ENCODE measurements at regions of chr12 and their contacts with region 1.

Region 1: DNA sequence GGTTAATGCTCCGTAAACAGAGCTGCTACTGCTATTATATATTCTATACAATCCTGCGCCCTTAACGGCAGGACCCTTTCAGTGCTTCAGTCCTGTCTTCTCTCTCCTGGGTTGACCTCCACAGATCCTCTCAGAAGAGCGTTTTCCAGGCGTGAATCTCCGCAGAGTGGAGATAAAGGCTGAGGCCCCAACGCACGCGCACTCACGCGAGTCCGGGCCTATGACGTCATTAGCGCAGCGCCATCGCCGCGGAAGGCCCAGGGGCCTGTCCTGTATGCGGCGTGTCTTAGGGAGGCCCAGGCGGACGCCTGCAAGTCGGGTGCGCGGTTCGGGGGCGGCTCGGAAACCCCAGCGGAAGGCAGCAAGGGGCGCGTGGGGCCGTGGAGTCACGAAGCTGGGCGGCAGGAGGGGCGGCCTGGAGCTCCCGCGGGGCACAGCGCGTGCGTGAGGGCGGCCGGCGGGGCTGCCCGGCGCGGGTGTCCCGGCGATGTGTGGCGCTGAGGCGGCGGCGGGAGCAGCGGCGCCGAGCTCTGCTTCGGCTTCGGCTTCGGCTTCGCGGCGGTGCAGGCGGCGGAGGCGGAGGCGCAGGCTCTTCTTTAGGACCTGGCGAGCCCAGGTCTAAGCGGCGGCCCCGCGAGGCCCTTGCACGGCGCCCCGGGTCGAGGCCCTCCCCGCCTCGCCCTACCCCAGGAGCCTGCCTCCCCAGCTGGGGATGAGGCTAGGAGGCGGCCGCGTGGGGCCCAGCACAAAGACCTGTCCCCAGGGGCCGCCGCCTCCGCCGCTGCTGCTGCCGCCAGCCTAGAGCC is at the start of gene MAPKAPK5:
- DNase-seq: peak; percentile 97
- ATAC-seq: peak; percentile 81
- H3K4me3 Mint-ChIP-seq: peak within 1 kb of the TSS; percentile 87
- H3K27ac Mint-ChIP-seq: peak within 1 kb of the TSS; percentile 96
- H3K4me1 Mint-ChIP-seq: peaks cover 50% of the 10 kb centered on the region
- H3K27me3 Mint-ChIP-seq: no peaks in the 10 kb centered on the region
- total RNA-seq, gene MAPKAPK5: 47.5 to 57.5 TPM

Region 2: DNA sequence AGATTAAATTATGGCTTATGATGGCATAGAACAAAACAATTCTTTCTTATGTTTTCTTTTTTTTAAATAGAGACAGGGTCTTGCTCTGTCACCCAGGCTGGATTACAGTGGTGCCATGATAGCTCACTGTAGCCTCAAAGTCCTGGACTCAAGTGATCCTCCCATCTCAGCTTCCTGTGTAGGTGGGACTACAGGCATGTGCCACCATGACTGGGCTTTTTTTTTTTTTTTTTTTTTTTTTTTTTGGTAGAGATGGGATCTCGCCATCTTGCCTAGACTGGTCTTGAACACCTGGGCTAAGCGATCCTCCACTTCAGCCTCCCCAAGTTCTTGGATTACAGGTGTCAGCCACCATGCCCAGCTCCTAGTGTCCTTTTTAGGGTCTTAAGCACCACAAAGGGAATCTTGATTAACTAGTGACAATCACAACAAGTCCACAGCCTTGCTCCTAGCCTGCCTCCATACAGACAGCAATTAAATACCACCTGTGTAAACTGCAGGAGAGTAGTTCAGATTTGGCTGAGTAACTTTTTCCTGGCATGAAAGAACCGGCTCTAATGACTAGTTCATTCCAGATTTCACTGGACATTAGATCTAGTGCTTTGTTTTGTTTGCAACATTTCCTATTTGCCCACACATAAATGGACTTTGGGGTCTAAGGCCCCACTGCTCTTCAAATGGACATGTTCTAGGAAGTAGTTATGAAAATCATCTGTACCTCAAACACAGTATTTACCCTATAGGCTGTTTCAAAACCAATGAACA is 374.7 kb before region 1 on chr12:
- CTCF ChIA-PET with region 1: no interaction called
- POLR2A ChIA-PET with region 1: no interaction called
- intact Hi-C with region 1: no loop called
- DNase-seq: no peak
- ATAC-seq: no peak
- H3K4me3 Mint-ChIP-seq: no peak overlapping the region
- H3K27ac Mint-ChIP-seq: no peak overlapping the region
- H3K4me1 Mint-ChIP-seq: peaks cover 4% of the 10 kb centered on the region
- H3K27me3 Mint-ChIP-seq: no peaks in the 10 kb centered on the region

Region 3: GRCh38 chr12:111685744-111686517 is 156.0 kb before region 1 on chr12 and contains the starts of genes ACAD10 and BRAP:
- CTCF ChIA-PET with region 1: no interaction called
- POLR2A ChIA-PET with region 1: no interaction called
- intact Hi-C with region 1: loop called (anchors 1 kb)
- DNase-seq: peak; percentile 95
- ATAC-seq: peak; percentile 97
- H3K4me3 Mint-ChIP-seq: peak within 1 kb of the TSS; percentile 89
- H3K27ac Mint-ChIP-seq: peak within 1 kb of the TSS; percentile 91
- H3K4me1 Mint-ChIP-seq: peaks cover 31% of the 10 kb centered on the region
- H3K27me3 Mint-ChIP-seq: no peaks in the 10 kb centered on the region
- total RNA-seq, gene ACAD10: 25.5 to 27.5 TPM
- total RNA-seq, gene BRAP: 18.3 to 23.6 TPM

Region 4: DNA sequence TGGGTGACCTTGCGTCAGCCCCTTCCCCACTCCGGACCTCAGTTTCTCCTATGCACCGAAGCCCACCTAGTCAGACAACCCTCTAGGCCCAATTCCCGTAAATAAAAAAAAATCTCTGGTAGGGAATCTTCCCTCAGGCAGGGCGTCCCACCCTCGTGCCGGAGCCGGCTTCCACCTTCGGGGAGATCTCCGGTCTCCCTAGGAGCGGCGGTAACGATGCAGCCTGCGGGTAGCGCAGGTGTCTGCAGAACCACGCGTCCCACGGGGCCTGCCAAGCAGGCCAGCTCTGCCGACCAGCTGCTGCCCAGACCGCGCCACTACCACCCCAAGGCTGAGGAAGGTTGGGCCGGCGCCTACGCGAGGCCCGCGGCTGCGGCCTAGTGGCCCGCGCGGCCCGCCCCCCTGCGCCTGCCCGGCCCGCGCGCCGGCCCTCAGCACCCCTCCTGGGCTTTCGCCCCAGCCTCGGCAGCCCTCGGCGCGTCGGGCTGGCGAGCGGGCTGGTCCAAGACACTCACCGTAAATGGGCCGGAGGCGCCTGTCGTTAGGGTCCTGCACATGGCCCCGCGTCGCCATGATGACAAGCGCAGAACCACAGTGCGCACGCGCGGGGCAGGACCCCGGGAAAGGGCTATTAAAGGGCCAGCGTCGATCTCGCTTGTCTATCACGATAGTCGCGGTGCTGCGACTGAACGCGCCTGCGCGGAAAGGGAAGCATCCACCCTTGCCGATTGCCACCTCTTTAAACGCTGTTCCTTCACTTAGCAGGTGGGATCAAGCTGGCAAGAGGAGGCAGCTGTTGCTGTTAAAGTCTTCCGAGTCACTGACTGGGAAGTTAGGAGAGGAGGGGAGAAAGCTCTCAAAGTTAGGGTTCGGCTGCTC is 266.5 kb after region 1 on chr12 and contains the start of gene NAA25:
- CTCF ChIA-PET with region 1: no interaction called
- POLR2A ChIA-PET with region 1: no interaction called
- intact Hi-C with region 1: loop called in 1 of 2 experiments (anchors 1 kb)
- DNase-seq: peak; percentile 94
- ATAC-seq: peak; percentile 80
- H3K4me3 Mint-ChIP-seq: peak within 1 kb of the TSS; percentile 97
- H3K27ac Mint-ChIP-seq: peak within 1 kb of the TSS; percentile 99
- H3K4me1 Mint-ChIP-seq: peaks cover 55% of the 10 kb centered on the region
- H3K27me3 Mint-ChIP-seq: no peaks in the 10 kb centered on the region
- total RNA-seq, gene NAA25: 50.9 to 58.5 TPM

Region 5: GRCh38 chr12:112418608-112419298 is 576.8 kb after region 1 on chr12 and contains the start of gene PTPN11:
- CTCF ChIA-PET with region 1: no interaction called
- POLR2A ChIA-PET with region 1: interaction called, 3 read pairs
- intact Hi-C with region 1: loop called in 1 of 2 experiments (anchors 1 kb)
- DNase-seq: peak; percentile 95
- ATAC-seq: peak; percentile 78
- H3K4me3 Mint-ChIP-seq: peak within 1 kb of the TSS; percentile 97
- H3K27ac Mint-ChIP-seq: peak within 1 kb of the TSS; percentile 97
- H3K4me1 Mint-ChIP-seq: peaks cover 40% of the 10 kb centered on the region
- H3K27me3 Mint-ChIP-seq: no peaks in the 10 kb centered on the region
- total RNA-seq, gene PTPN11: 129 to 134 TPM